Activated CD4-positive, alpha-beta memory T cell treated with anti-CD3 and anti-CD28 coated beads for 36 hours (primary cell): ENCODE measurements at regions of chrX and their contacts with region 1.

Region 1: GRCh38 chrX:102712952-102713625 is 841 bp downstream of the GPRASP2 start:
- DNase-seq: peak; percentile 11
- H3K4me3 Mint-ChIP-seq: peak overlapping the region; percentile 72
- H3K27ac Mint-ChIP-seq: no peak overlapping the region
- H3K4me1 Mint-ChIP-seq: peaks cover 8% of the 10 kb centered on the region
- H3K27me3 Mint-ChIP-seq: peaks cover 10% of the 10 kb centered on the region

Region 2: DNA sequence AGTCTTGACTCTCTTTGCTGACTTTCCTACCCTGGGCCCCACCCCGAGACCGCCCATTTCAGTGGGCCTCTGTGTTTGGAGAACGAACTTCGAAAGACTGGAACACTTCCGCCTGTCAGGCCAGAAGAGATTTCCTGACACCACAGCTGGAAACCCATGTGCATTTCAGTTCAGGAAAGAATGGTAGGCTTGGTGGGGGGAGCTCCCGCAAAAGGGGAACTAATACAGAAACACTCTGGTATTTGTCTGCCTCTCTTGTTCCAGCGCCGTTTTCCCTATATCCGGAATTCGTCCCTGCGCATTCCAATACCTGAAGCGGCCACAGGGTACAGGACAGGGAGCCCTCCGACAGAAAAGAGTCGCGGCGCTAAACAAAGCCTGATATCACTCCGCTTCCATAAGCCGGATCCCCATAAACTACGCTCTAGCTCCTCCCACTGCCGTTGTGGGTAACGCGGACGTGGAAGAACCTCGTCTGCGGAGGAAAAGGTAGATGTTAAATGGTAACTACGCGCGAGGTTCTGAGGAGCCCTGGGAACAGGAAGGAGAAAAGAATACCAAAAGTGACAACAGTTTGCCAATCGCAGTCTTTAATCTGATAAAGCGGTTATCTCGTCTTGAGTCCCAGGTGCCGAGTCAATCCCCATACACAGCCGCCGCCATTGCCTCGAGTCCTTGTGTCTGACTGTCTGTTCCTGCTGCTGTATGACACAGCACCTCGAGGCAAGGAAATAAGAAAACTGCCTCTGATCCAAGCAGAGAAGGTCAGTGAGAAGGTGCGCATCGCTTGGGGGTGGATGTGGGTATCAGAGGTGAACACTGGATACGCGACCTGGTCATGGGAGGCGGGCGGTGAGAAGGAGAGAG is 113.8 kb before region 1 on chrX and contains the start of gene ARMCX5:
- CTCF ChIA-PET with region 1: no interaction called
- POLR2A ChIA-PET with region 1: no interaction called
- intact Hi-C with region 1: loop called (anchors 10 kb)
- DNase-seq: peak; percentile 76
- H3K4me3 Mint-ChIP-seq: peak within 1 kb of the TSS; percentile 99
- H3K27ac Mint-ChIP-seq: peak within 1 kb of the TSS; percentile 93
- H3K4me1 Mint-ChIP-seq: peaks cover 30% of the 10 kb centered on the region
- H3K27me3 Mint-ChIP-seq: no peaks in the 10 kb centered on the region
- total RNA-seq, gene ARMCX5: 7.5 to 10.0 TPM

Region 3: GRCh38 chrX:102652031-102652688 is 60.9 kb before region 1 on chrX:
- CTCF ChIA-PET with region 1: no interaction called
- POLR2A ChIA-PET with region 1: no interaction called
- intact Hi-C with region 1: loop called (anchors 5 kb)
- DNase-seq: peak; percentile 69
- H3K4me3 Mint-ChIP-seq: peak overlapping the region; percentile 90
- H3K27ac Mint-ChIP-seq: peak overlapping the region; percentile 75
- H3K4me1 Mint-ChIP-seq: peaks cover 16% of the 10 kb centered on the region
- H3K27me3 Mint-ChIP-seq: no peaks in the 10 kb centered on the region

Region 4: DNA sequence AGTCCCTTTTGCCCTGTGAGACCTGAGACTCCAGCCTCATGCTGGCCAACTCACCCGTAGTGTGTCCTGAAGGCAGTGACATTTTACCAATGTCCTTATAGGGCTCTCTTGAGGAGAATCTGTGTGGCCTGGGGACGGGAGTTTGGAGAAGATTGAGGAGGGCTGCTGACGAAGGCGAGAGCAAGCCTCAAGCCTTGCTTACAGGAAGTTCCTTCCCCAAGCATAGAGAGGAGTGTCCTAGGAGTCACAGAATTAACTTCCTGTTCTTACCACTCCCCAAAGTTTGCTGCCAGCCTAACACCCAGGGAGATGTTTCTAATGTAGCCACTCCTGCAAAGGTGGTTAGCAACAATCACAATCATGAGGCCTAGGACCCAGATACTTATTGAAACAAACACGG is 379.9 kb after region 1 on chrX and contains the start of gene NXF3:
- CTCF ChIA-PET with region 1: no interaction called
- POLR2A ChIA-PET with region 1: no interaction called
- intact Hi-C with region 1: no loop called
- DNase-seq: no peak
- H3K4me3 Mint-ChIP-seq: no peak within 1 kb of the TSS
- H3K27ac Mint-ChIP-seq: no peak within 1 kb of the TSS
- H3K4me1 Mint-ChIP-seq: no peaks in the 10 kb centered on the region
- H3K27me3 Mint-ChIP-seq: peaks cover 2% of the 10 kb centered on the region
- total RNA-seq, gene NXF3: not detected